ENCODE measurements at regions of chr12 and their contacts with region 1.

Region 1: GRCh38 chr12:81147292-81147919 is 69.5 kb downstream of the ACSS3 start:
- DNase-seq: peak; percentile 25
- ATAC-seq: peak; percentile 74
- H3K4me3 ChIP-seq: no peak overlapping the region
- H3K27ac ChIP-seq: peak overlapping the region; percentile 89
- H3K4me1 ChIP-seq: peaks cover 61% of the 10 kb centered on the region
- H3K27me3 ChIP-seq: no peaks in the 10 kb centered on the region
- CTCF ChIP-seq: peak; percentile 69
- EP300 ChIP-seq: no peak
- POLR2A ChIP-seq: no peak
- RAD21 ChIP-seq: no peak

Region 2: DNA sequence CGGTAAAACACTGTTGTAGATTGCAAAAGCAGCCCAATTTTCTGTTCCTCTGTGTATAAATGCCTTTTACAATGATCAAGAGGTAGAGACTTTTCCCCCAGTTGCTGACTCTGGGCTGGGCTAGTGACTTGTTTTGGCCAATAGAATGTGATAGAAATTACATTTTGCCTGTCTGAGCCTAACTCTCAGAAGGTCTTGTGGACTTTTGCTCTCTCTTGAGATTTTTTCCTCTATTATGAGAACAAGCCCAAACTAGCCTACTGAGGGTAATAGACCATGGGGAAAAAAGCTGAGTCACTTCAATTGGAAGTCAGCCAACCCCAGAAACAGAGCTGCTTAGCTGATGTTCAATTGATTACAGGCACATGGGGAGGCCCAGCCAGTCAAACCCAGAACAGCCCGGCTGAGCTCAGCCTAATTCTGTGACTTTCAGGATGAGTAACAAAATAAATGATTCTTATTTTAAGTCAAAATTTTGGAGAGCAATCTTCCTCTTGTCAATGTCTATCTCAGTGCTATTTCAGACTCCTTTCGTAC is 369.3 kb before region 1 on chr12:
- CTCF ChIA-PET with region 1: no interaction called
- POLR2A ChIA-PET with region 1: no interaction called
- in situ Hi-C with region 1: no loop called
- intact Hi-C with region 1: loop called (anchors 2 kb)
- DNase-seq: peak; percentile 96
- ATAC-seq: peak; percentile 98
- H3K4me3 ChIP-seq: no peak overlapping the region
- H3K27ac ChIP-seq: peak overlapping the region; percentile 90
- H3K4me1 ChIP-seq: peaks cover 48% of the 10 kb centered on the region
- H3K27me3 ChIP-seq: no peaks in the 10 kb centered on the region
- CTCF ChIP-seq: no peak
- EP300 ChIP-seq: peak; percentile 57 to 90; a peak in 3 of 4 replicates
- POLR2A ChIP-seq: no peak
- RAD21 ChIP-seq: no peak

Region 3: GRCh38 chr12:81128930-81129554 is 18.4 kb before region 1 on chr12:
- CTCF ChIA-PET with region 1: no interaction called
- POLR2A ChIA-PET with region 1: no interaction called
- in situ Hi-C with region 1: no loop called
- intact Hi-C with region 1: loop called (anchors 1 kb)
- DNase-seq: peak; percentile 72
- ATAC-seq: peak; percentile 90
- H3K4me3 ChIP-seq: no peak overlapping the region
- H3K27ac ChIP-seq: peak overlapping the region; percentile 31
- H3K4me1 ChIP-seq: peaks cover 22% of the 10 kb centered on the region
- H3K27me3 ChIP-seq: no peaks in the 10 kb centered on the region
- CTCF ChIP-seq: peak; percentile 73
- EP300 ChIP-seq: no peak
- POLR2A ChIP-seq: no peak
- RAD21 ChIP-seq: peak; percentile 39; the same call in 1 of the 2 replicates